Panc1 (cell line): ENCODE measurements at regions of chr10 and their contacts with region 1.

Region 1: DNA sequence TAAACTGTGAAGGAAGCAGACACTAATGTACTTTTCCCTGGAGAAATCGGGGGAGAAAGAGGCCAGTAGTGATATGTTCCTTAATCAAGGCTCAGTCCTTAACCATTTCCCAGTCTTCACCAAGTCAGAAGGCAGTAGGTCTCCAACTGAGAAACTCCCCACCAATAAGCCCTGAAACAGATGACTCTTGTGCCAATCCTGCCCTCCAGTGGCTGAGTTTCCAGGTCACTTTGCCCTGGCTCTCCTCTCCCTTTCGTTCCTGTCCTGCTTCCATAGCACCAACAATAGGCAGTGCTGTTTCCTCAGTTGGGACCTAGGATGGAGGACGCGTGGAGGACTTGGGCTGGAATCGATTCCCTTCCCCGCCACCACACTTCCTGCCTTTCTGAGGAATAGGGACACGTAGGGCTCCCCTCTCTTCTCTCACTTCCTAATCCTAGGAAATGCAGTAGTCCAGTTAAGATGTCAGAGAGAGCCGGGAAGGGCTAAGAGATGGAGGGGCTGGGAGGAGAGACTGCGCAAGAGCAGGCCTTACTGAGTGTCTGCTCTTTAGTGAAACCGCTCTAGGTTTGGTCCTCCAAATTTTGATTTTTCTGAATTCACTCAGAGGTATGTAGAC is 23.4 kb downstream of the ATOH7 start:
- DNase-seq: no peak
- ATAC-seq: peak; percentile 95
- H3K4me3 ChIP-seq: no peak overlapping the region
- H3K27ac ChIP-seq: peak overlapping the region; percentile 68
- H3K4me1 ChIP-seq: no peaks in the 10 kb centered on the region
- H3K27me3 ChIP-seq: no peaks in the 10 kb centered on the region
- CTCF ChIP-seq: peak; percentile 89

Region 2: GRCh38 chr10:68082872-68083271 is 125.7 kb before region 1 on chr10:
- CTCF ChIA-PET with region 1: interaction called, 3 read pairs
- POLR2A ChIA-PET with region 1: no interaction called
- in situ Hi-C with region 1: no loop called
- intact Hi-C with region 1: loop called (anchors 2 kb)
- DNase-seq: no peak
- ATAC-seq: peak; percentile 61
- H3K4me3 ChIP-seq: no peak overlapping the region
- H3K27ac ChIP-seq: peak overlapping the region; percentile 100
- H3K4me1 ChIP-seq: peaks cover 73% of the 10 kb centered on the region
- H3K27me3 ChIP-seq: no peaks in the 10 kb centered on the region
- CTCF ChIP-seq: peak; percentile 75; the same call in 1 of the 2 replicates

Region 3: DNA sequence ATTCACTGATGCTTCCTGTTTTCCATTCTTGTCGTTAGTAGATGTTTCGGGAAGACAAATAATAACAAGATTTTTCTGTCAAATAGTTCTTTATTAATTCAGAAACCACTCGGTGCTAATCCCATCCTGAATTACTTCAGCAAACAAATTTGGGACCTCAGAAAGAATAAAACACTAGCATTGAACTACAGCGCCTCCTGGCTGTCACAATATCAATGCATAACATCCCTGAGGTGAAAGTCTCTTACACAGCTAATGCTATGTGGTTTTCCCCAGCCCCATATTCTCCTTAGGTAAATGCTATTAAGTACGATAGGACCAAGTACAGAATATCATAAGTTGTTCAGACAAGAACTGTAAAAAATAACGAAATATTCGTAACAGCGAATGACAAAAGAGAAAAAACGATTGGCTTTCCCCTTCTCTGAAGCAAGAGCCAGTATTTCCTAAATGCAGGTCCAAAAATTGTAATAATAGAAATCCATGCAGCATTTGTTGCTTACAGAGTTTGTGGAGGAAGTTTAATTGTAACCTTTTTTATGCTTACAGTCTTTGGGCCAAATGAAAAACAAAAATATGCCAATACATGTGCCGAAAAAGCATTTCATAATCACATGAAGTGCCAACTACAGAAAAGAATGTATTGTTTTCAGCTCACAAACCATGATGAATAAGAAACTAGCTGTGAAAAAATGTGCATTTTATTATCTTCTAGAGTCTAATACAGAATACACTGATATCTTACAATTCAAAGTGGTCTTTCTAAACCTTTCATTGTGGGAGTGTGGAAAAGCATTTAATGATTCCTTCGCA is 52.0 kb before region 1 on chr10:
- CTCF ChIA-PET with region 1: interaction called, 11 read pairs
- POLR2A ChIA-PET with region 1: no interaction called
- in situ Hi-C with region 1: no loop called
- intact Hi-C with region 1: no loop called
- DNase-seq: peak; percentile 59
- ATAC-seq: no peak
- H3K4me3 ChIP-seq: no peak overlapping the region
- H3K27ac ChIP-seq: peak overlapping the region; percentile 99
- H3K4me1 ChIP-seq: peaks cover 63% of the 10 kb centered on the region
- H3K27me3 ChIP-seq: no peaks in the 10 kb centered on the region
- CTCF ChIP-seq: peak; percentile 88

Region 4: GRCh38 chr10:68301790-68302502 is 93.4 kb after region 1 on chr10:
- CTCF ChIA-PET with region 1: interaction called, 30 read pairs
- POLR2A ChIA-PET with region 1: no interaction called
- in situ Hi-C with region 1: no loop called
- intact Hi-C with region 1: loop called (anchors 5 kb)
- DNase-seq: peak; percentile 72
- ATAC-seq: peak; percentile 90
- H3K4me3 ChIP-seq: no peak overlapping the region
- H3K27ac ChIP-seq: no peak overlapping the region
- H3K4me1 ChIP-seq: peaks cover 13% of the 10 kb centered on the region; the same call in 1 of the 2 replicates
- H3K27me3 ChIP-seq: no peaks in the 10 kb centered on the region
- CTCF ChIP-seq: peak; percentile 73

Region 5: GRCh38 chr10:68618234-68618633 is 409.7 kb after region 1 on chr10:
- CTCF ChIA-PET with region 1: no interaction called
- POLR2A ChIA-PET with region 1: no interaction called
- in situ Hi-C with region 1: no loop called
- intact Hi-C with region 1: no loop called
- DNase-seq: no peak
- ATAC-seq: no peak
- H3K4me3 ChIP-seq: no peak overlapping the region
- H3K27ac ChIP-seq: no peak overlapping the region
- H3K4me1 ChIP-seq: no peaks in the 10 kb centered on the region
- H3K27me3 ChIP-seq: no peaks in the 10 kb centered on the region
- CTCF ChIP-seq: no peak

Region 6: DNA sequence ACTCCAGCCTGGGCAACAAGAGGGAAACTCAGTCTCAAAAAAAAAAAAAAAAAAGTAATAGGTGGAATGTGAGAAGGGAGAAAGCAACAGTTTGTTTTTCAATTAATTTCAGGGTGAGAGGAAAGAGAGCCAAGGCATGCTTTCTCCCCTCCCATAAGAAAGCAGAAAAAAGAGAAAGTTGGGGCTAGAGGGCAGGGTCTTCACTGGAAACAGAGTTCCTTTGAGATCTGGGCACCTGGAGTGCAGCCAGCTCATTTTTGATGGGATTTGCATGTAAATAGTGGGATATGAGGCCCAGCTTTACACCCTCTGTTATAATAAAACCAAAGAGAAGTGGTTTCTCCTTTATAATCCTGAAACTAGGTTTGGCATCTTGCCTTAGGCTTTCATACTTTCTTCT is 605.0 kb after region 1 on chr10:
- CTCF ChIA-PET with region 1: no interaction called
- POLR2A ChIA-PET with region 1: no interaction called
- in situ Hi-C with region 1: no loop called
- intact Hi-C with region 1: no loop called
- DNase-seq: no peak
- ATAC-seq: no peak
- H3K4me3 ChIP-seq: no peak overlapping the region
- H3K27ac ChIP-seq: no peak overlapping the region
- H3K4me1 ChIP-seq: no peaks in the 10 kb centered on the region
- H3K27me3 ChIP-seq: no peaks in the 10 kb centered on the region
- CTCF ChIP-seq: no peak

Region 7: GRCh38 chr10:69451209-69451783 is 1242.8 kb after region 1 on chr10 and contains the start of gene TSPAN15:
- CTCF ChIA-PET with region 1: no interaction called
- POLR2A ChIA-PET with region 1: no interaction called
- in situ Hi-C with region 1: no loop called
- intact Hi-C with region 1: no loop called
- DNase-seq: no peak
- ATAC-seq: peak; percentile 80
- H3K4me3 ChIP-seq: peak within 1 kb of the TSS; percentile 69 to 84
- H3K27ac ChIP-seq: peak within 1 kb of the TSS; percentile 90
- H3K4me1 ChIP-seq: peaks cover 78% of the 10 kb centered on the region
- H3K27me3 ChIP-seq: no peaks in the 10 kb centered on the region
- CTCF ChIP-seq: no peak
- total RNA-seq, gene TSPAN15: 199 TPM